SK-N-SH (cell line): ENCODE measurements at regions of chr1 and their contacts with region 1.

Region 1: DNA sequence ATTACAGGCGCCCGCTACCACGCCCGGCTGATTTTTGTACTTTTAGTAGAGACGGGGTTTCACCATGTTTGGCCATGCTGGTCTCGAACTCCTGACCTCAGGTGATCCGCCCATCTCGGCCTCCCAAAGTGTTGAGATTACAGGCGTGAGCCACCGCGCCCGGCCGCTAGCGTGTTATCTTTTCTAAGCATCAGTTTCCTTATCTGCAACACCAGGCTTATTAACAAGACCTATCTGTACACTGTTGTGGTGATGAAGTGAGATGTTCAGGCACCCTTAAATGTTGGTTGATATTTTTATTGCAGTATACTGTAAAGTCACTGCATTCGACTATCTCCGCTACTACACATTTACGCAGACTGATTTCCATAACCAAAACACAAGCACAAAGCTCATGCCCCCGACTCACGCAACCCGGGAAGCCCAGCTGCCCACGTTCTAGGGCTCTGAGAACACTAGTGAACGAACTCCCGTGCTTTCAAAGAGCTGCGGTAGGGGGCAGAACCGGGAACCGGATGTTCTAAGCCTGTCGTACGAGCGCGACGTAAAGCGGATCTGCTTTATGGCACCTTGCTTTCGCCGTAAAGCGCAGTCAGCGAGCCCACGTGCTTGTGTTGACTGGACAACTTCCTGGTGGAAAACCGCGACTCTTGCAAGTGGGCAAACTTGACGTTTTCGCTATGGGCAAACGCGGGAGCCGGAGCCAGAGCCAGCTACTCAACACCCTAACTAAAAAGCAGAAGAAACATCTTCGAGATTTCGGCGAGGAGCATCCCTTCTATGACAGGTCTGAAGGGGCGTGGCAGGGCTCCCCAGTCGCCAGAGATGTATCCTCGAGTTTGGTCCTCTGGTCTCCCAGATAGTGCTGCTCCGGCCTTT is at the start of gene UTP25:
- DNase-seq: peak; percentile 80
- H3K4me3 ChIP-seq: peak within 1 kb of the TSS; percentile 81 to 88
- H3K27ac ChIP-seq: peak within 1 kb of the TSS; percentile 76 to 98
- H3K4me1 ChIP-seq: peaks cover 6 to 33% of the 10 kb centered on the region in 2 experiments
- H3K27me3 ChIP-seq: no peaks in the 10 kb centered on the region
- CTCF ChIP-seq: peak; percentile 75
- EP300 ChIP-seq: no peak; a peak in 1 of 4 replicates
- RAD21 ChIP-seq: peak; percentile 49
- polyA plus RNA-seq, gene UTP25: 6.3 and 9.3 TPM in 2 replicates

Region 2: GRCh38 chr1:209784265-209785169 is 43.1 kb before region 1 on chr1 and contains the start of gene C1orf74:
- CTCF ChIA-PET with region 1: interaction called, 10 read pairs
- POLR2A ChIA-PET with region 1: interaction called, 6 read pairs
- DNase-seq: peak; percentile 97
- H3K4me3 ChIP-seq: peak within 1 kb of the TSS; percentile 75 to 81
- H3K27ac ChIP-seq: peak within 1 kb of the TSS; percentile 84 to 91
- H3K4me1 ChIP-seq: peaks cover 7 to 18% of the 10 kb centered on the region in 2 experiments; a peak in 3 of 4 replicates
- H3K27me3 ChIP-seq: no peaks in the 10 kb centered on the region
- CTCF ChIP-seq: no peak
- EP300 ChIP-seq: no peak
- RAD21 ChIP-seq: no peak; the same call in 1 of the 2 replicates
- polyA plus RNA-seq, gene C1orf74: 1.5 and 2.1 TPM in 2 replicates

Region 3: GRCh38 chr1:209805875-209806760 is 21.5 kb before region 1 on chr1 and contains the start of gene IRF6:
- CTCF ChIA-PET with region 1: interaction called, 78 read pairs
- POLR2A ChIA-PET with region 1: interaction called, 6 read pairs
- DNase-seq: no peak
- H3K4me3 ChIP-seq: no peak within 1 kb of the TSS
- H3K27ac ChIP-seq: peak within 1 kb of the TSS in 1 of 2 experiments; percentile 84; a peak in 2 of 4 replicates
- H3K4me1 ChIP-seq: peaks cover 20 to 41% of the 10 kb centered on the region in 2 experiments
- H3K27me3 ChIP-seq: no peaks in the 10 kb centered on the region
- CTCF ChIP-seq: no peak
- EP300 ChIP-seq: no peak
- RAD21 ChIP-seq: no peak
- polyA plus RNA-seq, gene IRF6: 0.94 and 1.6 TPM in 2 replicates

Region 4: GRCh38 chr1:209850342-209850979 is 22.8 kb after region 1 on chr1:
- CTCF ChIA-PET with region 1: interaction called, 18 read pairs
- POLR2A ChIA-PET with region 1: interaction called, 3 read pairs
- DNase-seq: peak; percentile 74
- H3K4me3 ChIP-seq: no peak overlapping the region
- H3K27ac ChIP-seq: peak overlapping the region in 1 of 2 experiments; percentile 80; a peak in 2 of 4 replicates
- H3K4me1 ChIP-seq: peaks cover 3 to 11% of the 10 kb centered on the region in 2 experiments; a peak in 3 of 4 replicates
- H3K27me3 ChIP-seq: no peaks in the 10 kb centered on the region
- CTCF ChIP-seq: peak; percentile 92
- EP300 ChIP-seq: no peak
- RAD21 ChIP-seq: peak; percentile 81

Region 5: GRCh38 chr1:210170220-210170619 is 342.6 kb after region 1 on chr1:
- CTCF ChIA-PET with region 1: no interaction called
- POLR2A ChIA-PET with region 1: no interaction called
- DNase-seq: no peak
- H3K4me3 ChIP-seq: no peak overlapping the region
- H3K27ac ChIP-seq: no peak overlapping the region
- H3K4me1 ChIP-seq: no peaks in the 10 kb centered on the region; a peak in 1 of 4 replicates
- H3K27me3 ChIP-seq: no peaks in the 10 kb centered on the region
- CTCF ChIP-seq: no peak
- EP300 ChIP-seq: no peak
- RAD21 ChIP-seq: no peak